ENCODE measurements at regions of chr6 and their contacts with region 1.

Region 1: GRCh38 chr6:85344996-85345395 is 104.9 kb upstream of the NT5E start:
- DNase-seq: no peak
- CTCF ChIP-seq: no peak

Region 2: GRCh38 chr6:85329196-85329595 is 15.8 kb before region 1 on chr6:
- CTCF ChIA-PET with region 1: interaction called, 14 read pairs
- POLR2A ChIA-PET with region 1: interaction called, 10 read pairs
- DNase-seq: no peak
- CTCF ChIP-seq: no peak

Region 3: DNA sequence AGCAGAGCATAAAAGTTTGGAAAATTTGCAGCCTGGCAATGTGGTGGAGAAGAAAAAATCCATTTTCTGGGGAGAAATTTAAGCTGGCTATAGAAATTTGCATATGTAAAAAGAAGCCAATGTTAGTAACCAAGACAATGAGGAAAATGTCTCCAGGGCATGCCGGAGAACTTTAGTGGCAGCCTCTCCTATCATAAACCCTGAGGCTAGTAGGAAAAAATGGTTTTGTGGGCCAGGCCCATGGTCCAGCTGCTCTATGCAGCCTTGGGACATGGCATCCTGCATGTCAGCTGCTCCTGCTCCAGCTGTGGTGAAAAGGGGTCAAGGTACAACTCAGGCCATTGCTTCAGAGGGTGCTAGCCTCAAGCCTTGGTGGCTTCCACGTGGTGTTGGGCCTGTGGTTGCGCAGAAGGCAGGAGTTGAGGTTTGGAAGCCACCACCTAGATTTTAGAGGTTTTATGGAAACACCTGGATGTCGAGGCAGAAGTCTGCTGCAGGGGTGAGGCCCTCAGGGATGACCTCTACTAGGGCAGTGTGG is 399.5 kb after region 1 on chr6:
- CTCF ChIA-PET with region 1: no interaction called
- POLR2A ChIA-PET with region 1: no interaction called
- DNase-seq: no peak
- CTCF ChIP-seq: no peak